ENCODE measurements at regions of chr11 and their contacts with region 1.

Region 1: DNA sequence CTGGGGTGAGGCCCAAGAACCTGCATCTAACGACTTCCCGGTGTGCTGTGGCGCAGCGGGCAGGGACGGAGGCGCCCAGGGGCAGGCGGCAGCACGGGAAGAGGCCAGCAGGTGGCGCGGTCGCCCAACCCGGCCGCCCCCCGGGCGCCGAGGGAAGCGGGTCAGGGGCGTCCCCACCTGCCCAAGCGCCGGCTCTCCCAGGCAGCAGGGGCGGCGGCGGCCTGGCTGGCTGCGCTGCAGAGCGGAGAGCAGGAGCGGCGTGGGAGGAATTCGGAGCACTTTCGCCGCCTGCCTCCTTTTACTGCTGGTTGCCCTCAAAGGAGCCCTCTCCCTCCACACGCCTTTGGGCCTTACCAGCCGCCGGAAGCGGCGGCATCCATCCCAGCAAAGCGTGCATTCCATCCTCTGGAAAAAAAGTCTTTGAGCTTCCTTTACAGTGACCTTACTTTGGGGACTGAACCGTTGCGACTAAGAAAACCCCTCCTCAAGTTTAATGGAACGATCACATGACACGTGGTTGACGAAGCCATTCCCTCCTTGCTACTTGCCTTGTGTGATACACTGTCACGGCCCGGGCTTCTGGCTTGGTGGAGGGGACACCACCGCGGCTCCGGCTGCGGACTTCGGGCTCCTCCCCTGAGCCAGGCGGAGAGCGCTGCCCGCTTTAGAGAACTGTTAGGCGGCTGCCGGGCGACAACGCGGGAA is 106.8 kb upstream of the CLMP start:
- DNase-seq: peak; percentile 67
- H3K4me3 Mint-ChIP-seq: peak overlapping the region; percentile 58
- H3K27ac Mint-ChIP-seq: peak overlapping the region; percentile 84
- H3K4me1 Mint-ChIP-seq: peaks cover 45% of the 10 kb centered on the region
- H3K27me3 Mint-ChIP-seq: peaks cover 2% of the 10 kb centered on the region

Region 2: DNA sequence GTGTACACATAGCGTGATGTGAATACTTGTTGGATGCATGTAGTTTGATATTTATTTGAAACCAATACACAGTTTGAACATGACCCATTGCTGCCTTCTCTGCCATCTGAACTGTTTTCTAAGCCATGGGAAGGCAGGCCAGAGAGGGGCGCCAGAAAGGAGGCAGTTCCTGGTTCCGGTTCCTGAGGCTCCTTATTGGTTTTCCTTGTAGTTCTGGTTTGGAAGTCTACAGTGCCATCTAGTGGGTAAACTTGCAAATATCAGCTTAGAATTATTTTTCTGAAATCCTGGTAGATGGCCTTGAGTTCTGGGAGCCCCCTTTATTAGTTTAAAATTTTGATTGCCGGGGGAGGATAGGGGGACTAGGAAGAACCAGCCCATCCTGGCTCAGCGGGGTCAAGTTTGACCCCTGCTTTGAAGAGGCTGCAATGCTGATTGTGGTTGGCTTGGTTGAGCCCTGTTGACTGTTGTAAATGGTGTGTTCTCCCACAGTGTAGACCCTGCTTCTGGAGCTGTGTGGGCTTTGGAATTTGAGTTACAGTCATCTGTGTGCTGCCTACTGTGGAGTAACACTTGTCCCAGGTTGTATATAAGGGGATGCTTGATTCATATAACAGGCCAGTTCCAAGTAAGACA is 176.6 kb after region 1 on chr11:
- intact Hi-C with region 1: loop called (anchors 1 kb)
- DNase-seq: no peak
- H3K4me3 Mint-ChIP-seq: no peak overlapping the region
- H3K27ac Mint-ChIP-seq: peak overlapping the region; percentile 60
- H3K4me1 Mint-ChIP-seq: peaks cover 51% of the 10 kb centered on the region
- H3K27me3 Mint-ChIP-seq: no peaks in the 10 kb centered on the region

Region 3: GRCh38 chr11:123577081-123577598 is 275.3 kb after region 1 on chr11:
- intact Hi-C with region 1: loop called (anchors 5 kb)
- DNase-seq: peak; percentile 27
- H3K4me3 Mint-ChIP-seq: no peak overlapping the region
- H3K27ac Mint-ChIP-seq: no peak overlapping the region
- H3K4me1 Mint-ChIP-seq: peaks cover 13% of the 10 kb centered on the region
- H3K27me3 Mint-ChIP-seq: no peaks in the 10 kb centered on the region

Measured in activated T-helper 2 cell treated with anti-CD3 and anti-CD28 coated beads, Interferon-gamma antibody, Interleukin-2, Interleukin-4, amounts not matched to agents 10 μg/mL and 5 μg/mL and 100 μg/mL, durations not matched to agents 14 hours and 24 hours and 36 hours (primary cell).